WTC11 (cell line): ENCODE measurements at regions of chr9 and their contacts with region 1.

Region 1: DNA sequence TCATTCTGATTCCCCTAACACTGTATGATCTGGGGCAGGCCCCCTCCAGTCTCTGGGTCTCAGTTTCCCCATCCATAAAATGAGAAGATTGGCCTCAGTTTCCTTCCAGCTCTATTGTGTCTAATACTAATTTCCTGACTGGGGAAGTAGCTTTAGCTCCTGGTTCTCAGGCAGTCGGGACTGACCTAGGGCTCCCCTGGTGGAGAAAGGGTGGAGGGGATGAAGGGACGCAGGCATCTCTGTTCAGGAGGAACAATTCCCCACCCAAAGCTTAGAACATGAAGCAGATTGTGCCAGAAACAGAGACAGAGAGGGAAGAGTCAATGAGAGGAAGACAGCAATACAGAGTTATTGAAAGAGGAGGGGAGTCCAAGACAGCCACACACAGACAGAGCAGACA is 14.2 kb upstream of the PTGS1 start:
- DNase-seq: peak; percentile 55
- ATAC-seq: peak; percentile 96
- H3K4me3 Mint-ChIP-seq: no peak overlapping the region
- H3K27ac Mint-ChIP-seq: no peak overlapping the region
- H3K4me1 Mint-ChIP-seq: peaks cover 4% of the 10 kb centered on the region; the same call in 1 of the 2 replicates
- H3K27me3 Mint-ChIP-seq: peaks cover 12% of the 10 kb centered on the region; the same call in 1 of the 2 replicates
- CTCF ChIP-seq: peak; percentile 30; the same call in 1 of the 2 replicates

Region 2: GRCh38 chr9:121992571-121993212 is 363.9 kb before region 1 on chr9:
- CTCF ChIA-PET with region 1: no interaction called
- POLR2A ChIA-PET with region 1: no interaction called
- DNase-seq: peak; percentile 39
- ATAC-seq: peak; percentile 63
- H3K4me3 Mint-ChIP-seq: no peak overlapping the region
- H3K27ac Mint-ChIP-seq: no peak overlapping the region
- H3K4me1 Mint-ChIP-seq: no peaks in the 10 kb centered on the region
- H3K27me3 Mint-ChIP-seq: peaks cover 18% of the 10 kb centered on the region
- CTCF ChIP-seq: peak; percentile 83

Region 3: GRCh38 chr9:122116040-122116439 is 240.6 kb before region 1 on chr9:
- CTCF ChIA-PET with region 1: interaction called, 366 read pairs
- POLR2A ChIA-PET with region 1: no interaction called
- DNase-seq: no peak
- ATAC-seq: peak; percentile 81
- H3K4me3 Mint-ChIP-seq: no peak overlapping the region
- H3K27ac Mint-ChIP-seq: no peak overlapping the region
- H3K4me1 Mint-ChIP-seq: peaks cover 39% of the 10 kb centered on the region
- H3K27me3 Mint-ChIP-seq: no peaks in the 10 kb centered on the region; the same call in none of the 2 replicates
- CTCF ChIP-seq: no peak

Region 4: DNA sequence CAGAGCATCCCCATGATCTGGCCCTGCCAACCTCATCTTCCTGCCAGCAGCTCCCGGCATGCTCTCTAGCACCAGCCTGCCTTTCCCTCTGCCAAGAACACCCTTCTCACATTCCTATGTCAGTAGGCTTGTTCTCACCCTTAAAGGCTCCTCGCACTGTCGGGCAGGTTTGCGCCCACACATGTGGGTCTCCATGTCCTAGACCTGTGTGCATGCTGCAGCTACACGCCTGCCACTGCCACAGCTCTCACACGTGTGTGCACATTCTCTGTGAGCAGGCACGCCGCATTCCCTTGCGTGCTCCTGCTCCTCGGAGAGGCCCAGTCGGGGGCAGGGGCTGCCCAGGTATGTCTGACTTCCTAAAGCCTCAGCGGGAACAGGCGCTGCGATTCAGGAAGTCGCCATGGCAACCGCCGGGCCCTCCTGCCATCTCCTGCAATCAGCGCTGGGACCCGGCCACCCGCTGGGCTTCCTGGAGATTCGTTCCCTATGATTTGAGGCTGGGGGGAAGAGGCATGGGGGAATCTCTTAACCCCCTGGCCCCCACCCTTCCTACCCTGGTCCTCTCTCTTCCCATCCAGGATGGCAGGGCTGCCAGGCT is 225.1 kb before region 1 on chr9:
- CTCF ChIA-PET with region 1: interaction called, 366 read pairs
- POLR2A ChIA-PET with region 1: no interaction called
- DNase-seq: peak; percentile 79
- ATAC-seq: peak; percentile 61
- H3K4me3 Mint-ChIP-seq: peak overlapping the region; percentile 43
- H3K27ac Mint-ChIP-seq: no peak overlapping the region
- H3K4me1 Mint-ChIP-seq: peaks cover 53% of the 10 kb centered on the region
- H3K27me3 Mint-ChIP-seq: peaks cover 31% of the 10 kb centered on the region
- CTCF ChIP-seq: no peak

Region 5: DNA sequence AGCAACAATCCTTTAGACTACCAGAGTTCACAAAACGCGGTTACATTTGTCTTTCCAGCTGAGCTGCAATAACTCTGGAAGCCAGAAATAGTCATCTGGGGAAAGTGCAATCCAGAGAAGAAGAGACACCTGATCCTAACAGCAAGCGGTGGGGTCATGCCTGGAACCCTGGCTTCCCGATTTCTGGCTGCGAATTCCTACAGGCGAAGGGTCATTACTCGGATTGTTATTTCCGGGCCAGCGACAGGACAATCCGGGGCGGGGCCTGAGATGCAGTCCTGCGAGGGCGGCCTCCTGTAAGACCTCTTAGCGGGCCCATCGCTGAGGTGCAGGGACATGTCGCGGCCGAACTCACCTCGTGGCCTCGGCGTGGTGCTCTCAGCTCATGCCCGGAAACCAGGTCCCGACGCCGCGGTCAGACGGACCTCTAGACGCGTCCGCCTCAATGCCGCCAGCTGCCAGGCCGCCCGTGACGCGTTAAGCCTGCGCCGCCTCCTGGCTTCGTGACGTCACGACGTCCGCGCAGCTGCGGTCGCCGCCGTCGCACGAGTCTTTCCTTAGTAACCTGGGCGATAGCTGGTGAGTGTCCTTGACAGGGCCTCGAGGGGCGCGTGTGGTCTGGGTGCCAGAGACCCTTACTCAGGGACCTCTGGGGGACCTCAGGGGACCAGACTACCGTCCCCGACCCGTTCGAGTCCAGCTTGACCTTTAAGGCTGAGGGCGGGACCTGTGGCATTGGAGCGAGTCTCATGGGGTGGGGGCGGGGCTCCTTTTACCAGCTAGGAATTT is 92.1 kb before region 1 on chr9 and contains the starts of genes MRRF and RBM18:
- CTCF ChIA-PET with region 1: interaction called, 11 read pairs
- POLR2A ChIA-PET with region 1: no interaction called
- DNase-seq: peak; percentile 93
- ATAC-seq: peak; percentile 84
- H3K4me3 Mint-ChIP-seq: peak within 1 kb of the TSS; percentile 95
- H3K27ac Mint-ChIP-seq: peak within 1 kb of the TSS; percentile 99
- H3K4me1 Mint-ChIP-seq: peaks cover 20% of the 10 kb centered on the region
- H3K27me3 Mint-ChIP-seq: no peaks in the 10 kb centered on the region
- CTCF ChIP-seq: no peak
- total RNA-seq, gene MRRF: 36.1 to 42.3 TPM (median 38.8 TPM) in 3 replicates
- total RNA-seq, gene RBM18: 11.4 to 14.3 TPM (median 13.1 TPM) in 3 replicates

Region 6: GRCh38 chr9:122338994-122339393 is 17.6 kb before region 1 on chr9:
- CTCF ChIA-PET with region 1: interaction called, 23 read pairs
- POLR2A ChIA-PET with region 1: no interaction called
- DNase-seq: no peak
- ATAC-seq: no peak
- H3K4me3 Mint-ChIP-seq: no peak overlapping the region
- H3K27ac Mint-ChIP-seq: no peak overlapping the region
- H3K4me1 Mint-ChIP-seq: peaks cover 60% of the 10 kb centered on the region
- H3K27me3 Mint-ChIP-seq: peaks cover 8% of the 10 kb centered on the region
- CTCF ChIP-seq: no peak

Region 7: DNA sequence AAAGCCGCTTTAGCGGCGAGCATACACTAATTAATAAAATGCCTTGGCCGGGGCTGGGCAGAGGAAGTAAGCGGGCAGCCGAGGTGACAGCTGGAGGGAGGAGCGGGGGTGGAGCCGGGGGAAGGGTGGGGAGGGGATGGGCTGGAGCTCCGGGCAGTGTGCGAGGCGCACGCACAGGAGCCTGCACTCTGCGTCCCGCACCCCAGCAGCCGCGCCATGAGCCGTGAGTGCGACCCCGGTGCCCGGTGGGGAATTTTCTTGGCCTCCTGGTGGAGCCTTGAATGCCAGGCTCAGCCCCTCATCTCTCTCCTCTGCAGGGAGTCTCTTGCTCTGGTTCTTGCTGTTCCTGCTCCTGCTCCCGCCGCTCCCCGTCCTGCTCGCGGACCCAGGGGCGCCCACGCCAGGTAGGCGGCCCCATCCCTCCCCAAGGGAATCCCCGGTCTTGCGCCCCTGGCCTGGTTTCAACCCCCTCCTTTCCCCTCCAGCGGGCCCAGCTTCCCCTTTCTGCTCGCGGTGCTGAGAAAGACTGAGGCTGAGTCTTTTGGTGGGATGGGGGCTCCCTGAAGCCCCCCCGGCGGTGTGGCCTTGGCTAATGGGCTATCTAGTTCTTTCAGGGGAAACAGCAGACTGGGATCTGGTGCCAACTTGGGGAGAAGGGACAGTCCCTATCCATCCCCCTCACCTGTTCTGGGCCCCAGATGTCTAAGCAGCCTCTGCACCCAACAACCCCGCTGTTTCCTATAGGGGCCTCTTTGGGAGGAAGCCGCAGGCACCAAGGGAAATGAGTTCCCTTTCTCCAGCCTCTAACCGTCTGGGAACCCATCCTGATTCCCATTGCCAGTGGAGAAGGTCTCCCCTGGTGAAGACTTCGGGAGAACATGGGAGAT is 14.5 kb after region 1 on chr9 and contains the start of gene PTGS1:
- CTCF ChIA-PET with region 1: interaction called, 33 read pairs
- POLR2A ChIA-PET with region 1: no interaction called
- DNase-seq: peak; percentile 36
- ATAC-seq: peak; percentile 66
- H3K4me3 Mint-ChIP-seq: peak within 1 kb of the TSS; percentile 76
- H3K27ac Mint-ChIP-seq: no peak within 1 kb of the TSS
- H3K4me1 Mint-ChIP-seq: peaks cover 31% of the 10 kb centered on the region
- H3K27me3 Mint-ChIP-seq: peaks cover 76% of the 10 kb centered on the region
- CTCF ChIP-seq: no peak
- total RNA-seq, gene PTGS1: 0.89 to 1.1 TPM (median 1.0 TPM) in 3 replicates

Region 8: GRCh38 chr9:122394265-122395125 is 37.9 kb after region 1 on chr9:
- CTCF ChIA-PET with region 1: interaction called, 11 read pairs
- POLR2A ChIA-PET with region 1: no interaction called
- DNase-seq: no peak
- ATAC-seq: no peak
- H3K4me3 Mint-ChIP-seq: no peak overlapping the region
- H3K27ac Mint-ChIP-seq: no peak overlapping the region
- H3K4me1 Mint-ChIP-seq: peaks cover 6% of the 10 kb centered on the region
- H3K27me3 Mint-ChIP-seq: peaks cover 4% of the 10 kb centered on the region
- CTCF ChIP-seq: no peak